CD8-positive, alpha-beta T cell (primary cell): ENCODE measurements at regions of chr15 and their contacts with region 1.

Region 1: DNA sequence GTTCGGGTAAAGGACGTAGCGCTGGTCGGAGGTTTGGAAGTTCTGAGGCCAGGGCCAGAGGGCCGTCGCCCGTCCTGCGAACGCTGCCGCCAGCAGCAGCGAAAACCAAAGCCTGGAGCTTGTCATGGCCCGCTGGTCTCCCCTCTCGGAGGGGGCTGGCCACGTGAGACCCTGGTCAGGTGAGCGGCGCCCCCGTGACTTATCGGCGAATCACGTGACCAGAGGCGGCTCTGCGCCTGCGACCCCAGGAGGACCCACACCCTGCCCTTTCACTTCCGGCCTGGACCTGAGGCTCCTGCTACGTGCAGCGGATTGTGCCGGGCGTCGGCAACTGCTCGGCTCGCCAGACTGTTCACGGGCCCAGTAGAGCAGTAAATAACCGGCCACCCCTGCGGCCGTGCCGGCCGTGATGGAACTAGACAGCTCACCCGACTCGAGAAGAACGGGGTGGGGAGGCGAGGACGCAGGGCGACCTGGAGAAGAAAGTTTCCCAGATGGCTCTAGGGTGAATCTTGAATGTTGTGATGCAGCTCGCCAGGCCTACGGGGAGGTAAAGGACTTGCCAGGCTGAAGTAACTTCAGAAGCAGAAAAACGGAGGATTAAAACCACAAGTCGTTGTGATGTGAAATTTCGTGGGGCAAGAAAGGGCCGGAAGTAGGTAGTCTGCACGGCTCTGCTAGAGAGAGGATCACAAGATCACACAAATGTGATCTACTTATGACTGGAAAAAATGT is at the start of gene HEXA:
- DNase-seq: peak; percentile 94 to 99 (median 97)
- ATAC-seq: peak; percentile 73
- H3K4me3 ChIP-seq: peak within 1 kb of the TSS; percentile 75 to 77
- H3K4me3 Mint-ChIP-seq: peak within 1 kb of the TSS; percentile 90
- H3K27ac ChIP-seq: peak within 1 kb of the TSS; percentile 83 to 90
- H3K27ac Mint-ChIP-seq: peak within 1 kb of the TSS; percentile 96
- H3K4me1 ChIP-seq: peaks cover 36% of the 10 kb centered on the region
- H3K4me1 Mint-ChIP-seq: peaks cover 56% of the 10 kb centered on the region
- H3K27me3 ChIP-seq: no peaks in the 10 kb centered on the region
- H3K27me3 Mint-ChIP-seq: no peaks in the 10 kb centered on the region
- CTCF ChIP-seq: no peak
- total RNA-seq, gene HEXA: 68.6 to 76.0 TPM

Region 2: DNA sequence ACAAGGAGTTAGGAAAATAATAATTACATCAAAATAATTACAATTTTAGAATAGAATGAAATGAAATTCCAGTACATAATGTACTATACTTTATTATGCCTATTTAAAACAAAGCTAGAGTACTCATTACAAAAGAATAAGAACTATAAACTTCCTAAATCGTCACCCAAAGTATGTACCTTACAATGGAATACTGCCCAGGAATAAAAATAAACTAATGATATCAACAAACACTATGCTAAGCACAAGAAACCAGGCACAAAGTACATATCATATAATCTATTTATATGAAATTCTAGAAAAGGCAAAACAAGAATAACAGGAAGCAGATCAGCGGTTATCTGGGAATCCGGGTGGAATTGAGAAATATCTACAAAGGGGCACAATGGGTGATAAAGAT is 342.7 kb before region 1 on chr15:
- CTCF ChIA-PET with region 1: no interaction called
- POLR2A ChIA-PET with region 1: no interaction called
- intact Hi-C with region 1: no loop called
- DNase-seq: no peak
- ATAC-seq: no peak
- H3K4me3 ChIP-seq: no peak overlapping the region
- H3K4me3 Mint-ChIP-seq: no peak overlapping the region
- H3K27ac ChIP-seq: no peak overlapping the region
- H3K27ac Mint-ChIP-seq: no peak overlapping the region
- H3K4me1 ChIP-seq: no peaks in the 10 kb centered on the region
- H3K4me1 Mint-ChIP-seq: peaks cover 18% of the 10 kb centered on the region
- H3K27me3 ChIP-seq: no peaks in the 10 kb centered on the region
- H3K27me3 Mint-ChIP-seq: no peaks in the 10 kb centered on the region
- CTCF ChIP-seq: no peak

Region 3: GRCh38 chr15:72184165-72184889 is 191.7 kb before region 1 on chr15:
- CTCF ChIA-PET with region 1: no interaction called
- POLR2A ChIA-PET with region 1: no interaction called
- intact Hi-C with region 1: no loop called
- DNase-seq: no peak
- ATAC-seq: no peak
- H3K4me3 ChIP-seq: no peak overlapping the region
- H3K4me3 Mint-ChIP-seq: no peak overlapping the region
- H3K27ac ChIP-seq: no peak overlapping the region
- H3K27ac Mint-ChIP-seq: no peak overlapping the region
- H3K4me1 ChIP-seq: no peaks in the 10 kb centered on the region
- H3K4me1 Mint-ChIP-seq: no peaks in the 10 kb centered on the region
- H3K27me3 ChIP-seq: peaks cover 0 to 4% of the 10 kb centered on the region in 2 experiments
- H3K27me3 Mint-ChIP-seq: peaks cover 32% of the 10 kb centered on the region
- CTCF ChIP-seq: no peak

Region 4: GRCh38 chr15:72252663-72253299 is 123.2 kb before region 1 on chr15:
- CTCF ChIA-PET with region 1: no interaction called
- POLR2A ChIA-PET with region 1: no interaction called
- intact Hi-C with region 1: no loop called
- DNase-seq: no peak
- ATAC-seq: no peak
- H3K4me3 ChIP-seq: no peak overlapping the region
- H3K4me3 Mint-ChIP-seq: no peak overlapping the region
- H3K27ac ChIP-seq: no peak overlapping the region
- H3K27ac Mint-ChIP-seq: no peak overlapping the region
- H3K4me1 ChIP-seq: no peaks in the 10 kb centered on the region
- H3K4me1 Mint-ChIP-seq: no peaks in the 10 kb centered on the region
- H3K27me3 ChIP-seq: no peaks in the 10 kb centered on the region
- H3K27me3 Mint-ChIP-seq: no peaks in the 10 kb centered on the region
- CTCF ChIP-seq: no peak

Region 5: DNA sequence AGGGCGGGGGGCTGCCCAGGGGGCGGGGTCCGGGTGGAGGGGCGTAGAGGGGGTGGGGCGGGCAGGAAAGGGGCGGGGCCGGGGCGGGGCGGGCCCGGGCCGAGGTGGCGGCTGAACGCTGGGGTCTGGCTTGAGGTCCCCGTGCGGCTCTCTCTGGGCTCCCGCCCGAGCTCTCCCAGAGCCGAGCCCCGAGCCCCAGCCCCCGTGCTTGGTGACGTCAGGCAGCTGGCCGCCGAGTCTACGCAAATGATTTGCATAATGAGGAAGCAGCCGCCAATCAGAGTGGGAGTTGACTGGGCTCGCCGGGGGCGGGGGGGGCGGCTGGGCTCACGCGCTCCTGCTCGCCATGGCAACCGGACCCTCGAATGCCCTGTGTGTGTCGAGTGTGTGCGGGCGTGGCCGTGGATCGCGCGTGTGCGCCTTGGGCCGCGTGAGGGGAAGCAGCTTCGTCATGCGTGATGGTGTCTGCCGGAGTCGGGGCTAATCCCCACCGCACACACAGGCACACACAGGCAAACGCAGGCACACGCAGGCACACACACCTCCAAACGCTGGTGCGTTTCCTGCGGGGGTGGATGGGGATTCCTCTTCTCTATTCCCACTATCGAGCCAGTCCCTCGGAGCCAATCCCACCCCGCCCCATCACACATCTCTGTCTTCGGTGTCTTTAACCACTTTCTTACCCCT is 55.9 kb before region 1 on chr15 and contains the start of gene CELF6:
- CTCF ChIA-PET with region 1: no interaction called
- POLR2A ChIA-PET with region 1: interaction called, 5 read pairs
- intact Hi-C with region 1: loop called (anchors 2 to 5 kb)
- DNase-seq: peak; percentile 41 to 91 (median 70)
- ATAC-seq: peak; percentile 82
- H3K4me3 ChIP-seq: peak within 1 kb of the TSS; percentile 14 to 53
- H3K4me3 Mint-ChIP-seq: peak within 1 kb of the TSS; percentile 80
- H3K27ac ChIP-seq: peak within 1 kb of the TSS in 1 of 2 experiments; percentile 25
- H3K27ac Mint-ChIP-seq: peak within 1 kb of the TSS; percentile 82
- H3K4me1 ChIP-seq: peaks cover 7% of the 10 kb centered on the region
- H3K4me1 Mint-ChIP-seq: peaks cover 17% of the 10 kb centered on the region
- H3K27me3 ChIP-seq: no peaks in the 10 kb centered on the region
- H3K27me3 Mint-ChIP-seq: no peaks in the 10 kb centered on the region
- CTCF ChIP-seq: no peak
- total RNA-seq, gene CELF6: 2.4 to 2.7 TPM

Region 6: GRCh38 chr15:72420576-72420975 is 44.6 kb after region 1 on chr15:
- CTCF ChIA-PET with region 1: no interaction called
- POLR2A ChIA-PET with region 1: no interaction called
- intact Hi-C with region 1: no loop called
- DNase-seq: no peak
- ATAC-seq: no peak
- H3K4me3 ChIP-seq: no peak overlapping the region
- H3K4me3 Mint-ChIP-seq: no peak overlapping the region
- H3K27ac ChIP-seq: no peak overlapping the region
- H3K27ac Mint-ChIP-seq: no peak overlapping the region
- H3K4me1 ChIP-seq: no peaks in the 10 kb centered on the region
- H3K4me1 Mint-ChIP-seq: no peaks in the 10 kb centered on the region
- H3K27me3 ChIP-seq: no peaks in the 10 kb centered on the region
- H3K27me3 Mint-ChIP-seq: no peaks in the 10 kb centered on the region
- CTCF ChIP-seq: no peak

Region 7: GRCh38 chr15:72464251-72464650 is 88.2 kb after region 1 on chr15:
- CTCF ChIA-PET with region 1: no interaction called
- POLR2A ChIA-PET with region 1: interaction called, 11 read pairs
- intact Hi-C with region 1: no loop called
- DNase-seq: no peak
- ATAC-seq: no peak
- H3K4me3 ChIP-seq: no peak overlapping the region
- H3K4me3 Mint-ChIP-seq: no peak overlapping the region
- H3K27ac ChIP-seq: no peak overlapping the region
- H3K27ac Mint-ChIP-seq: no peak overlapping the region
- H3K4me1 ChIP-seq: peaks cover 6% of the 10 kb centered on the region
- H3K4me1 Mint-ChIP-seq: peaks cover 17% of the 10 kb centered on the region
- H3K27me3 ChIP-seq: no peaks in the 10 kb centered on the region
- H3K27me3 Mint-ChIP-seq: no peaks in the 10 kb centered on the region
- CTCF ChIP-seq: no peak

Region 8: DNA sequence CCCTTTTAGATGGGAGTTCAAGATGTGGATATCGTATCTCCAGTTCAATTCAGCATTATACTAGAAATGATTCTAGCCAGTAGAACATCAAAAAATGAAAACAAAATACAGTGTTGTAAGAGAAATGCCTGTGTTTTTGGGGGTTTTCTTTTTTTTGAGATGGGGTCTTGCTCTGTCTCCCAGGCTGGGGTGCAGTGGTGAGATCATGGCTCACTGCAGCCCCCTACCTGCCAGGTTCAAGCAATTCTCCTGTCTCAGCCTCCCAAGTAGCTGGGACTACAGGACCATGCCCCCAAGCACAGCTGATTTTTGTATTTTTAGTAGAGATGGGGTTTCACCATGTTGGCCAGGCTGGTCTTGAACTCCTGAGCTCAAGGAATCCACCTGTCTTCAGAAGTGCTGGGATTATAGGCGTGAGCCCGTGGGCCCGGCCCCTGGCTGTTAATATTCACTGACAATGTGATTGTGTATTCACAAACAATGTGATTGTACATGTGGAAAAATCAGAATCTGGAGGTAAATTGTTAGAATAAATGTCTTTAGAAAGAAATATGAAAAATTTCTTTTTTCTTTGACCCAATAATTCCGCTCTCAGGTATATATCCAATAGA is 157.1 kb after region 1 on chr15:
- CTCF ChIA-PET with region 1: interaction called, 3 read pairs
- POLR2A ChIA-PET with region 1: no interaction called
- intact Hi-C with region 1: loop called (anchors 5 kb)
- DNase-seq: peak in 5 of 9 experiments; percentile 16 to 63 (median 37)
- ATAC-seq: peak; percentile 54
- H3K4me3 ChIP-seq: no peak overlapping the region
- H3K4me3 Mint-ChIP-seq: no peak overlapping the region
- H3K27ac ChIP-seq: no peak overlapping the region
- H3K27ac Mint-ChIP-seq: no peak overlapping the region
- H3K4me1 ChIP-seq: peaks cover 24% of the 10 kb centered on the region
- H3K4me1 Mint-ChIP-seq: peaks cover 66% of the 10 kb centered on the region
- H3K27me3 ChIP-seq: no peaks in the 10 kb centered on the region
- H3K27me3 Mint-ChIP-seq: no peaks in the 10 kb centered on the region
- CTCF ChIP-seq: peak; percentile 46

Region 9: DNA sequence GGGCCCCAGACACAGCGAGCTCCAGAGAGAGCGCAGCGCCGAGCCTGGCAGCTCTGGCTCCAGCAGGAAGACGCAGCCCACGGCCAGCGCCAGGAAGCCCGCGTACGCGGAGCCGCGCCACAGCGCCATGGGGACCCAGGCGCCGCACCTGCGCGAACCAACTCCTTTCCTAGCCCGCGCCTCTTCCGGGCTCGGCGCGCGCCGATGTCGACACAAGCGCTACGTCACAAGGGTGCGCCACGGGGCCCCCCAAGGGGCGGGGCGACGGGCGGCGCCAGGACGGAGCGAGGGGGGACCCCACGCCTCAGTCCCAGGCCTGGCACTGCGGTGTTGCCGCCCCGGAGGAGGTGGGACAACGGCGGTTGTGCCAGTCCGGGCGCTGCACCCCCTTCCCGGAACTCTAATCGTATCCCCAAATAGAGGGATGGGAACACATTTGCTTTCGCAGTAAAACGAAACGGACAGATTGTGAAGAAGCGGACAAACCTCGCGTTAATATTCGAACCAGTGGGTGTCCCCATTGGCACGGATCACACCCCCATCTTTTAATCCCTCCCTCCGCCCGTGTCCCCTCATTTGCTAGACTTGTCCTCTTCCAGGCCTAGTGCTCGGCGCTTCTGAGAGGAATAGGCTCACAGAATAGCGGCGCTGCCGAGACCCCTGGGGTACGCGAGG is 407.7 kb after region 1 on chr15 and contains the start of gene ADPGK:
- CTCF ChIA-PET with region 1: no interaction called
- POLR2A ChIA-PET with region 1: no interaction called
- intact Hi-C with region 1: loop called (anchors 2 kb)
- DNase-seq: peak; percentile 92 to 99 (median 96)
- ATAC-seq: peak; percentile 80
- H3K4me3 ChIP-seq: peak within 1 kb of the TSS; percentile 90 to 91
- H3K4me3 Mint-ChIP-seq: peak within 1 kb of the TSS; percentile 96
- H3K27ac ChIP-seq: peak within 1 kb of the TSS; percentile 93 to 95
- H3K27ac Mint-ChIP-seq: peak within 1 kb of the TSS; percentile 97
- H3K4me1 ChIP-seq: peaks cover 43% of the 10 kb centered on the region
- H3K4me1 Mint-ChIP-seq: peaks cover 50% of the 10 kb centered on the region
- H3K27me3 ChIP-seq: no peaks in the 10 kb centered on the region
- H3K27me3 Mint-ChIP-seq: no peaks in the 10 kb centered on the region
- CTCF ChIP-seq: no peak
- total RNA-seq, gene ADPGK: 113 to 120 TPM